ENCODE measurements at regions of chr7 and their contacts with region 1.

Region 1: GRCh38 chr7:106485031-106485551 is 175.9 kb downstream of the CCDC71L start:
- DNase-seq: no peak
- H3K4me3 Mint-ChIP-seq: peak overlapping the region; percentile 19
- H3K27ac Mint-ChIP-seq: peak overlapping the region; percentile 81
- H3K4me1 Mint-ChIP-seq: peaks cover 41% of the 10 kb centered on the region
- H3K27me3 Mint-ChIP-seq: no peaks in the 10 kb centered on the region

Region 2: DNA sequence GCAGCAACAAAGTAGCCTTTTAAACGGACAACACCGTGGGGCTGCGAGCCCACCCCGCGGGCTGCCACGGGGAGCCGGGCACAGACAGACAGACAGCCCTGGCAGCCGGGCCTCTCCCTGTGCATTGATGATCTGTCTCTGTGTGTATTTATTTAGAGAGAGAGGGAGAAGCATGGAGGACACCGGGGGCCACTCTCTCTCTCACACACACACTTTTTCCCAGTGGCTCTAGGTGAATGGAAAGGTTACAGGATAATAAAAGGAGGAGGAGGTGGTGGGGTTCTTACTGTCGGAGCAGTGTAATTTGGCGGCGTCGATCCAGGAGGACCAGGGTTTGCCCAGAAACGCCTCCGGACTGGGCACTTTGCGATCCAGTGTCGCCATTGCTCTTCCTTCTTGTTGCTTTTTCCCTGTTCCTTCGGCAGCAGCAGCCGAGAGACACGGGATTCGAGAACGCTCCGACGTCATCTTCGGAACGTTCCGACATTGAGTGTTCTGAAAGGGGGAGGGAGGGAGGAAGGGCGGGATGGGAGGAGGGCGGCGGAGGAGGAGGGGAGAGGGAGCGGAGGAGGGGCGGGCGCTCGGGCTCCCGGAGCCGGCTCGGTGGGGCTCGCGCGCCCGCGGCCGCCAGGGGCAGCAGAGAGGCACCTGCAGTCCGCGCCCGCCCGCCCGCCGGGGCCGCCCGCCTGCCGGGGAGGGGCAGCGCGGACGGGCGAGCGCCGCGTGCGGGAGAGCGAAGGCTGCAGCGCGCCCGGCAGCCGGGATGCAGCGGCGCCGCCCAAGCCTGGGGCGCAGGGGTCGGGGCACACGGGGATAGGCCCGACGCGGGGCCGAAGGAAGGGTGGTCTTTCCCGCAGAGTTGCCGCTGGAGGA is 608.8 kb before region 1 on chr7 and contains the start of gene ATXN7L1:
- intact Hi-C with region 1: no loop called
- DNase-seq: peak; percentile 80
- H3K4me3 Mint-ChIP-seq: peak within 1 kb of the TSS; percentile 96
- H3K27ac Mint-ChIP-seq: peak within 1 kb of the TSS; percentile 90
- H3K4me1 Mint-ChIP-seq: peaks cover 42% of the 10 kb centered on the region
- H3K27me3 Mint-ChIP-seq: peaks cover 35% of the 10 kb centered on the region
- total RNA-seq, gene ATXN7L1: 7.2 and 8.5 TPM in 2 replicates

Region 3: GRCh38 chr7:106425017-106425719 is 59.9 kb before region 1 on chr7:
- intact Hi-C with region 1: loop called (anchors 1 kb)
- DNase-seq: peak; percentile 67
- H3K4me3 Mint-ChIP-seq: peak overlapping the region; percentile 67
- H3K27ac Mint-ChIP-seq: peak overlapping the region; percentile 97
- H3K4me1 Mint-ChIP-seq: peaks cover 91% of the 10 kb centered on the region
- H3K27me3 Mint-ChIP-seq: no peaks in the 10 kb centered on the region

Region 4: GRCh38 chr7:106504645-106505044 is 19.6 kb after region 1 on chr7:
- intact Hi-C with region 1: loop called (anchors 1 kb)
- DNase-seq: no peak
- H3K4me3 Mint-ChIP-seq: no peak overlapping the region
- H3K27ac Mint-ChIP-seq: peak overlapping the region; percentile 40
- H3K4me1 Mint-ChIP-seq: peaks cover 21% of the 10 kb centered on the region
- H3K27me3 Mint-ChIP-seq: no peaks in the 10 kb centered on the region

Region 5: DNA sequence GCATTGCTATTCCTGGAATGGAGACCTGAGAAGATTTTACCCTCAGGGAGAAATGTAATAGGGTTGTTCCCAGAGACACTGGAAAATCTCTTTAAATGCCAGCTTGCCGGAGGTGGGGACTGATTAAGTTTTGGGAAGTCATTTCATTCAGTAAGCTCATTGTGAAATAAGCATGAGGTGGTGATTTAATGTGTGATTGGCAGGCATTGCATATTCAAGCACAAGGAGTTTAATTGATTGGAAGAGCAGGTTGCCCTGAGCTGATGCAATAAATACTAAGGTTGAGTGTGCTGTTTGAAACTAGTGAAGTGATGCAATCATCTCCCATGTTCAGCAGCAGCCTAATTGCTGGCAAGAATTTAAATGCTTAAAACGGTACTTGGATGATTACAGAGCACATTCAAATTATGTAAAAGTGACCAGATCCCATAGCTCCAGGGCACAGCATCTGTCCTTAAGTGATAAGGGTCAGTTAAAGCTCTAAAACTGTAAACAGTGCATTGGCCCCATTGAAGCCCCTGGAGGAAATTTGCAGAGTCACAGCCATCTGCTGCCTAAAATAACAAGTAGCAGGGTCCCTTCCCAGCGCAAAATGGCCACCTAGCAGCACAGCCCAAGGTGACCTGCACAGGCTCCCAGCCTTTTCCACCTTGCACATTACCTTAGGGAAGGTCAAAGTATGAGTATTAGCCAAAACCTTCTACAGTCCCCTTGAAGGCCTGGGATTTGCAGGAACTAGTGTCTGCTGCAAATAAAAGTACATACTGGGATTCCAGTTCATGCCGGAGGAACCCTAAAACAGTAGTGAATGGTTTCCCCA is 83.8 kb after region 1 on chr7:
- intact Hi-C with region 1: no loop called
- DNase-seq: no peak
- H3K4me3 Mint-ChIP-seq: no peak overlapping the region
- H3K27ac Mint-ChIP-seq: no peak overlapping the region
- H3K4me1 Mint-ChIP-seq: peaks cover 6% of the 10 kb centered on the region
- H3K27me3 Mint-ChIP-seq: no peaks in the 10 kb centered on the region

Region 6: DNA sequence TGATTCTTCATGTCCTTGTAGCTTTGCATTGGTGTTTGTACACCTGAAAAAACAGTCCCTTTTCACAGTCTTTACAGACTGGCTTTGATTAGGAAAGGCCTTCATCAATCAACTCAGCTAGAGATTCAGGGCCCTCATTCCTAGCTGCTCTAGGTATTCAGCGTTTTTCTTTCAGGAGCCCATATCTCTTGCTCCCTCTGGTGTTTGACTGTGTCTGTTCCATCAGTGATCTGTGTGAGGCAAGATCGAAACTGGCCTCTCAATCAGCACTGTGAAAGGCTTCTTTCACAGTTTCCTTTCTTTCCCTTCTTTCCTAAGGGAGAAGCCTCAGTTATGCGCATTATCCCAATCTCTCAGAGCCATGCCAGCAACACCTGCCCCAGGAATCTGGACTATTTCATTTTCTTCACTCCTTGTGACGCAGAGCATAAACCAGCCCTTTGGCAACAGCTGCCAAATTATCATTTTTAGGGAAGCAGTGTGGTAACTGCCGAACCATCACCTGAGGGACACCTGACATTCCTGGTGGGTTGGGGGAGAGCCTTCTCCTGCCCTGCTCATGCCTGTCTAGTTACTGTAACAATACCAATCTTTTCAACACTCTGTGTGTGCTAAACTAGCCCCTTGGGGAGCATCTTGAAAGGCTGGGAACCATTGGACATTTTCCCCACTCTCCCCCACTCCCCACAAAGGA is 251.6 kb after region 1 on chr7:
- intact Hi-C with region 1: loop called (anchors 5 kb)
- DNase-seq: peak; percentile 31
- H3K4me3 Mint-ChIP-seq: no peak overlapping the region
- H3K27ac Mint-ChIP-seq: no peak overlapping the region
- H3K4me1 Mint-ChIP-seq: peaks cover 32% of the 10 kb centered on the region
- H3K27me3 Mint-ChIP-seq: peaks cover 2% of the 10 kb centered on the region

Region 7: DNA sequence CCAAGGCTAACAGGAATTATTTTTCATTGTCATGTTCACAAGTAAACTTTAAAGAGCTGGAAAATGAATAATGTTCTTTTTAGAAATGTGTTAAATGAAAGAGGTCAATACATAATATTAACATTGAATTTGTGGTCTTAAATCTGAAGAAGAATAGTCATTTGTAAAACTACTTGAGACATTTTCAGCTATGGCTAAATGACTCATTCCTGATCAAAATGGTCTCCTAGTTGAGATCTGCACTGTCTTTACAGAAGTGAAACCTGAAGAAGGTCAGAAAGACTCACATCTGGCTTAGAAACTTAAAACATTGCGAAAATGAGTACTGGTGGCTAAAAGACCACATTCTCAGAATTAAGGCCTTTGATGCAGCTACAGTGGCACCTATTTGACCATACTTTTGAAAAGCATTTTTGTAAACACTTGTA is 385.9 kb after region 1 on chr7:
- intact Hi-C with region 1: loop called (anchors 1 kb)
- DNase-seq: no peak
- H3K4me3 Mint-ChIP-seq: peak overlapping the region; percentile 43
- H3K27ac Mint-ChIP-seq: peak overlapping the region; percentile 64
- H3K4me1 Mint-ChIP-seq: peaks cover 75% of the 10 kb centered on the region
- H3K27me3 Mint-ChIP-seq: no peaks in the 10 kb centered on the region